HCT116 (cell line): ENCODE measurements at regions of chr2 and their contacts with region 1.

Region 1: DNA sequence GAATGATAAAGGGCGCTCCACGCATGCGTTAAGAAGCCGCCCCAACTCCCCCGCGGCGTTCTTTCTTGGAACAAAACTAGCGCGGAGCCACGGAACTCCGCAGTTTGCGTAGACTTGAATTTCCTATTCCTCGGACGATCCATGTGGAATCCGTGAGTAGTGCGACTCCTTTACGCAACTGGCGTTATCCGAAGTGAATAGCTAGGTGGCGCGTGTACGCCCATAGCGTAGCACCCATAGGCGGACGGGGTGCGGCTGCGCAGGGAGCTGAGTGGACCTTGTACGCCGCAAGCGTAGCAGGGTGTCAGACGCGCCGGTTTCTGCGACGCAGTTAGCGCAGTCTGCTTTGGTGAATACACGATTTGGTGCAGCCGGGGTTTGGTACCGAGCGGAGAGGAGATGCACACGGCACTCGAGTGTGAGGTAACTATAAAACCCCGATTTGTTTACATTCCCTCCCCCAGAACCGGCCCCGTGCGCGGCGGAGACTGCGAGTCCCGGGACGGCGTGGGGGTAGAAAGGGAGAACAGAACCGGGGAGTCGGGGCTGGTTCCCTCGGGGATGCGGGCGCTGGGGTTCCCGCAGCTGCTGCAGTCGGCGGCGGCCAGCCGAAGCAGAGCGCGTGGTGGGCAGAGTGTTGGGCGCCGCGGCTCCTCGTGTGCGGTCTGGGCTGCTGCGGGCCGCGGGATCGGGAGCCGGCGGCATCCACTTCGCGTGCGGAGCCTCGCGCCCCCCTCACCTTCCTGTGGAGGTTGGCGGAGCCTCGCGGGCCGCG is at the start of gene SLC39A10:
- DNase-seq: peak; percentile 95
- ATAC-seq: peak; percentile 93
- H3K4me3 ChIP-seq: peak within 1 kb of the TSS; percentile 66 to 80
- H3K27ac ChIP-seq: peak within 1 kb of the TSS; percentile 87
- H3K4me1 ChIP-seq: peaks cover 11 to 17% of the 10 kb centered on the region in 2 experiments; a peak in 3 of 4 replicates
- H3K27me3 ChIP-seq: no peaks in the 10 kb centered on the region
- CTCF ChIP-seq: no peak
- POLR2A ChIP-seq: peak; percentile 87
- RAD21 ChIP-seq: no peak
- total RNA-seq, gene SLC39A10: 59.0 TPM

Region 2: DNA sequence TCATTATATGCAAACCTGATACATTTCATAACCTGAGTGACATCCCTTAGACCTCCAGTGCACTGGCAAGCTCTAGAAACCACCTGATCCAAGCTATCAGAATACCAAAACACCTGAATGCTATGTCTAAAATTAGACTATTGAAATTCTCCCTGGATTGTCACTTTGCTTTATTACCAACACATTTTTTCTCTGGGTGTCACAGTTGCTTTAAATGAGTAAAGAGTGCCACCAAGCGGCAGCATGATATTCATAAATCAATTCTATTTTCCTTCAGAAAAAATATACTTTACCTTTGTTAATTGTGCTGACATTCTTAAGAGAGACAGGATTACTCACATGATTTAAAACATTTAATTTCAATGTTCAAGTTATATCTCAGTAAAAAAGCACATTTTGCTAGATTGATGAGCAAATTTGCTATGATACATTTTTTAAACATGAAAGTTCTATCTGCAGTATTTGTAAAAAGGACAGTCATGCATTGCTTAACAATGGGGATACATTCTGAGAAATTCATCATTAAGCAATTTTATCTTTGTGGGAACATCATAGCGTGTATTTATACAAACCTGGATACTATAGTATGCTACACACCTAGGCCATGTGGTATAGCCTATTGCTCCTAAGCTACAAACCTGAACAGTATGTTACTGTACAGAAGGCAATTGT is 338.5 kb before region 1 on chr2:
- CTCF ChIA-PET with region 1: interaction called, 4 read pairs
- POLR2A ChIA-PET with region 1: interaction called, 3 read pairs
- RAD21 ChIA-PET with region 1: no interaction called
- intact Hi-C with region 1: loop called (anchors 5 kb)
- DNase-seq: peak; percentile 22
- ATAC-seq: peak; percentile 62
- H3K4me3 ChIP-seq: no peak overlapping the region
- H3K27ac ChIP-seq: no peak overlapping the region
- H3K4me1 ChIP-seq: peaks cover 2 to 3% of the 10 kb centered on the region in 2 experiments; a peak in 2 of 4 replicates
- H3K27me3 ChIP-seq: no peaks in the 10 kb centered on the region
- CTCF ChIP-seq: peak; percentile 38 to 77 (median 58); a peak in 4 of 6 replicates
- POLR2A ChIP-seq: no peak
- RAD21 ChIP-seq: peak; percentile 85

Region 3: DNA sequence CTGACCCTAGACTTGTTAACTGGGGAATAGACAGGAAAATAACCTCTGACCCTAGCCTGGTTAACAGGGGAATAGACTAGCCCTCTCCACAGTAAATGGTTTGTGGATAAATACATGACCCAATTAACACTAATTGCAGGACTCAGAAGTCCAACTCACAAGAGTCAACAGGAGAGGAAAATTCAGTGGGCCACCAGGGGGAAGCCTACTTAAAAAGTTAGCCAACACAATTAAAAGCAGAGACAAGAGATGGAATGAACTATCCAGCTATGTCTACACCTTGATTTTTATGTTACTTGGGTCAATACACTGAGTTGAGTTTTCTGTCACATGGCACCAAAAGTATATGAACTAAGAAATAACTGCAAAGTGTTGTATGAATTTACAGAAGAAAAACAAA is 158.9 kb before region 1 on chr2:
- CTCF ChIA-PET with region 1: interaction called, 16 read pairs
- POLR2A ChIA-PET with region 1: no interaction called
- RAD21 ChIA-PET with region 1: interaction called in 1 of 2 experiments, 3 read pairs
- intact Hi-C with region 1: loop called (anchors 1 kb)
- DNase-seq: peak; percentile 33
- ATAC-seq: peak; percentile 60
- H3K4me3 ChIP-seq: no peak overlapping the region
- H3K27ac ChIP-seq: no peak overlapping the region
- H3K4me1 ChIP-seq: no peaks in the 10 kb centered on the region
- H3K27me3 ChIP-seq: no peaks in the 10 kb centered on the region
- CTCF ChIP-seq: peak; percentile 26 to 56 (median 40); a peak in 5 of 6 replicates
- POLR2A ChIP-seq: no peak
- RAD21 ChIP-seq: peak; percentile 48

Region 4: DNA sequence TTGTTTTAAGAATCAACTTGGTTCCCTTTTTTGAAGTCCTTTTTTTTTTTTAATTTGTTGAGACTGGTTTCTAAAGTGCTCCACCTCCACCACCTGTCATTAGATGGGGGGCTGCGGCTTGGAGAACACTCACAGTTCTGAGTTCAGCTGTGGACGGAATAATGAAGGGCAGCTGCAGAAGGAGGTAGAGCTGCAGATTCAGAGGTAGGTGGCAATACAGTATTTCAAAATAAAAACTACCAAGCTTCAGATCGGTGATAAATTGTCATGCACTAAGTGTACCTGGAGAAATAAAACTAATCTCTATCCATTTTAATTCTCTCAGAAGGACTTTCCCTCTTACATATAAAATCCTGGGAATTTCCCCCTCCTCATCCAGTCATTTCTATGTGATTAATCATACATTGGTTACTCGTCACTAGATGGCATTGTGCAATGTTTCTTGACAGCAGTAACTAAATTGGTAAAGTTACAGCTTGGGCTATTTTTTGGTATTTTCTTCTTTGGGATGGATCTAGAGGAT is 81.1 kb before region 1 on chr2:
- CTCF ChIA-PET with region 1: interaction called, 11 read pairs
- POLR2A ChIA-PET with region 1: interaction called, 4 read pairs
- RAD21 ChIA-PET with region 1: no interaction called
- intact Hi-C with region 1: no loop called
- DNase-seq: peak; percentile 24
- ATAC-seq: peak; percentile 75
- H3K4me3 ChIP-seq: no peak overlapping the region
- H3K27ac ChIP-seq: no peak overlapping the region
- H3K4me1 ChIP-seq: peaks cover 0 to 8% of the 10 kb centered on the region in 2 experiments; a peak in 1 of 4 replicates
- H3K27me3 ChIP-seq: no peaks in the 10 kb centered on the region
- CTCF ChIP-seq: peak in 2 of 3 experiments; percentile 21 to 55; a peak in 2 of 6 replicates
- POLR2A ChIP-seq: no peak
- RAD21 ChIP-seq: peak; percentile 62

Region 5: DNA sequence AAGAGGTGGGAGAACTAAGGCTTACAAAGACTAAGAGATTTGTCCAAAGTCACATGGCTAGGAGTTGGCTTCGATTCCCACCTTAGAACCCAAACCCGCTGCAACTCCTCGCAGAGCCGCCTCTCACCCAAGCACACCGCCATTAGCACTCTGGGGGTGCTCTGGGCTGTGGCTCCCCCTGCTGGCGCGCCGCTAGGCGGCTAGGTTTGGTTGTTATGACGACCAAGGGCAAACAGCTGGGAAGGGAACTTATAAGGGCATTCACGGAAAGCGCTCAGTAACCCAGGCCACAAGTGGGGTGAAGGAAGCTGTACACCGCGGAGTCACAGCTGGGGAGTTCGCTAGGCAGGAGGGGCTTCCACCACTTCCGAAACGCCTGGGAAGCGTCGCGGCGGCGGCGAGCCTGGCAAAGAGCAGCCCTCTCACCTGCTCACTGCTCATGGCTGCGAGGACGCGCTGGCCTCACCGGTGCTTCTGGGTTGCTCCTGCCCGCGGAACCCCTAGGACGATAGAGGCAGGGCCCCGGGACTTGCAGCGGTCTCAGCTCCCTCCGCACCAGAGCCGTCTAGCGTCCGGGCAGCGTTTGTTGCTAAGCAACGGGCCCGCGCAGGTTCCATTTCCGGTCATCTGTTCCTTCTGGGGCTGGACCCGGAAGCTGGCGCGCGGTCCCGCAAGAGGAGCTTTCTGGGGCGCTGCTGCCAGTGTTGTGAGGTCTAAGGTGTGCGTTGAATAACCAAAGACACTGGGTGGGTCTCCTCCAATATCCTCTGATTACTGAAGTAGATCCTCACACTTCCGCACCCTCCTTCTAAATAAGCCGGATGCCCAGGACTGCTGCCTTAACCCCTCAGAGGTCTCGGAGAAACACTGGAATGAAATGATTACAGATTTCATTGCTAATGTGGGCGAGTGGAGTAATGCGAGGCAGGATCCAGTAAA is 411.5 kb after region 1 on chr2 and contains the start of gene DNAH7:
- CTCF ChIA-PET with region 1: interaction called, 15 read pairs
- POLR2A ChIA-PET with region 1: no interaction called
- RAD21 ChIA-PET with region 1: no interaction called
- intact Hi-C with region 1: no loop called
- DNase-seq: peak; percentile 31
- ATAC-seq: peak; percentile 94
- H3K4me3 ChIP-seq: no peak within 1 kb of the TSS
- H3K27ac ChIP-seq: no peak within 1 kb of the TSS
- H3K4me1 ChIP-seq: peaks cover 0 to 3% of the 10 kb centered on the region in 2 experiments; a peak in 1 of 4 replicates
- H3K27me3 ChIP-seq: no peaks in the 10 kb centered on the region
- CTCF ChIP-seq: peak; percentile 33 to 77 (median 70); a peak in 5 of 6 replicates
- POLR2A ChIP-seq: no peak
- RAD21 ChIP-seq: peak; percentile 69
- total RNA-seq, gene DNAH7: not detected

Region 6: DNA sequence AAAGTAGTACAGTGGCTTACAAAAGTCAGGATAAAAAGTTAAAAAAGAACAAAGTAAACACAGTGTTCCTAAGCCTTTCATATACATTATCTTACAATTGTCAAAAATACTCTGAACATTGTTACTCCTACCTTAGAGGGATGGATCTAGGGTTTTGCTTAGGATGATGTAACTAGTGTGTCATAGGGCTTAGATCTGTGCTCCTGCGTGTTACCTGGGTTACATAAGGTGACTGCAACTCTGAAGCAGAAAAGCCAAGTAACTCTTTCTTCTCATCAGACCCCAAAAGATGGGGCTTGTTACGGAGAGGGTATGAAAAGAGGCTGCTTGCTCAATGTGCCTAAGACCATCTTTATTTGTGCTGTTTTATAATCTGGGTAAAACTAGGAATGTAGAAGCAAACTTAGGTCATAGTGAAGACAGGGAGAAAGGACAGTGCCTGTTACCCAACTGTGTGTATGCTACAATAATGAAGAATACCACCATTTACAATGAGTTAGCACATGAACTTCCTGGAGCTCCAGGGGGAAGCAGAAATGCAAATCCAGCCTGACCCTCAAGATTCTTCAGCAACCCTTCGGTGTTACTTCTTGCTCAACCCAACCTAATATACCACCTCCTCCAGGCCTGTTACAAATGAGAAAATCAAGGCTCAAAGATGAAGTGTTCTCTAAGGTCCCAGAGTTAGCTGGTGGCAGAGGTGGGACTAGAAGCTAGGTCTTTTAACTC is 556.4 kb after region 1 on chr2:
- CTCF ChIA-PET with region 1: no interaction called
- POLR2A ChIA-PET with region 1: no interaction called
- RAD21 ChIA-PET with region 1: no interaction called
- intact Hi-C with region 1: no loop called
- DNase-seq: no peak
- ATAC-seq: no peak
- H3K4me3 ChIP-seq: no peak overlapping the region
- H3K27ac ChIP-seq: no peak overlapping the region
- H3K4me1 ChIP-seq: no peaks in the 10 kb centered on the region
- H3K27me3 ChIP-seq: no peaks in the 10 kb centered on the region
- CTCF ChIP-seq: no peak
- POLR2A ChIP-seq: no peak
- RAD21 ChIP-seq: no peak